ENCODE measurements at regions of chr10 and their contacts with region 1.

Region 1: DNA sequence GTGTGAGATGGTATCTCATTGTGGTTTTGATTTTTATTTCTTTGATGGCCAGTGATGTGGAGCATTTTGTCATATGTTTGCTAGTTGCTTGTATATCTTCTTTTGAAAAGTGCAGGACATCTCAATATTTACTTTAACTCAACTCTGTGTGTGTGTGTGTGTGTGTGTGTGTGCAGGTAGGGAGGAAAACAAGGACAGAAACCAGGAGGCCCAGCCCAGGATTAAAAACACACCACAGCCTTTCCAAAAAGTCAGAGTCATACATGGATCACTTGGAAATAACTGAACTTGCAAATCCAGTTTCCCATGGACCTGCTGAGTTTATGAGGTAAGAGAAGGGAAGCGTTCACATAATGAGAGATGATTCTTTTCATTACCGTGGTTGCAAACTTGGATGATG is 189.9 kb upstream of the LYZL1 start:
- DNase-seq: peak; percentile 26 to 79
- H3K4me3 ChIP-seq: no peak overlapping the region
- H3K27ac ChIP-seq: no peak overlapping the region
- H3K4me1 ChIP-seq: peaks cover 23% of the 10 kb centered on the region
- H3K27me3 ChIP-seq: no peaks in the 10 kb centered on the region
- CTCF ChIP-seq: no peak

Region 2: DNA sequence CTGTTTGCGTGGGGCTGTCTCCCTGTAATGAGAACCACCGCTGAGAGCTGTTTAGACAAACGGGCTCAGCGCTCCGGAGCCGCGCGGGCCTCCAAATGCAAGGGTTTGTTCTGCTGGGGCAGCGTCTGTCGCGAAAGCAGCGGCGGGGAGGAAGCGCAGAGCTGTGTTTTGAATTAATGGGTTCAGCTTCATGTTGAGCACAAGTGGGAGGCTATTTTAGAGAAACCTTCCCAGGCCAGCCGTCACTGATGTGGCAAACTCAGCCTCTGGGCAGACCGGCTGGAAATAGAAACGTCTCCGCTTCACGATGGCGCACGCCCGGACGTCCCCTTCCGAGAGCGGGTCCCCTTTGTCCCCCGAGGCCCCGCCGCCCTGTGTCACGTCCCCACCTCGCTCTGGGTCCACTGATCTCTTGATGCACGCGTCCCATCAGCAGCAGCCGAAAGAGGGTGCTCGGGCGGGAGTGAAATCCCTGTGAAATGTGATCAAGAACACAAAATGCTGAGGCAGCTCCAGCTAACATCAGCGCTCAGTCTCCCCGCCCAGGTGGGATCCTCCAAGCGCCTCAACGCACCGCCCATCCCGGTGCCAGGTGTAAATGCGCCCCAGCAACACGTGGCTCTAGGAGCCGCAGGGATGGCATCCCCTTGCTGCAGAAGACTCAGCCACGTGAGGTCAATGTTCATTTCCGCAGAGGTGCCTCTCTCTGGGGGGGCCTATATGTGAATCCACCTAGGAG is 376.7 kb before region 1 on chr10:
- CTCF ChIA-PET with region 1: no interaction called
- POLR2A ChIA-PET with region 1: no interaction called
- intact Hi-C with region 1: no loop called
- DNase-seq: no peak
- H3K4me3 ChIP-seq: no peak overlapping the region
- H3K27ac ChIP-seq: no peak overlapping the region
- H3K4me1 ChIP-seq: peaks cover 10% of the 10 kb centered on the region
- H3K27me3 ChIP-seq: no peaks in the 10 kb centered on the region
- CTCF ChIP-seq: no peak

Region 3: GRCh38 chr10:29050081-29050480 is 48.9 kb before region 1 on chr10:
- CTCF ChIA-PET with region 1: no interaction called
- POLR2A ChIA-PET with region 1: no interaction called
- intact Hi-C with region 1: no loop called
- DNase-seq: no peak
- H3K4me3 ChIP-seq: no peak overlapping the region
- H3K27ac ChIP-seq: no peak overlapping the region
- H3K4me1 ChIP-seq: 0 out of 2 replicates have a peak, but pooled peaks cover 5% of the 10 kb centered on the region
- H3K27me3 ChIP-seq: no peaks in the 10 kb centered on the region
- CTCF ChIP-seq: no peak

Region 4: DNA sequence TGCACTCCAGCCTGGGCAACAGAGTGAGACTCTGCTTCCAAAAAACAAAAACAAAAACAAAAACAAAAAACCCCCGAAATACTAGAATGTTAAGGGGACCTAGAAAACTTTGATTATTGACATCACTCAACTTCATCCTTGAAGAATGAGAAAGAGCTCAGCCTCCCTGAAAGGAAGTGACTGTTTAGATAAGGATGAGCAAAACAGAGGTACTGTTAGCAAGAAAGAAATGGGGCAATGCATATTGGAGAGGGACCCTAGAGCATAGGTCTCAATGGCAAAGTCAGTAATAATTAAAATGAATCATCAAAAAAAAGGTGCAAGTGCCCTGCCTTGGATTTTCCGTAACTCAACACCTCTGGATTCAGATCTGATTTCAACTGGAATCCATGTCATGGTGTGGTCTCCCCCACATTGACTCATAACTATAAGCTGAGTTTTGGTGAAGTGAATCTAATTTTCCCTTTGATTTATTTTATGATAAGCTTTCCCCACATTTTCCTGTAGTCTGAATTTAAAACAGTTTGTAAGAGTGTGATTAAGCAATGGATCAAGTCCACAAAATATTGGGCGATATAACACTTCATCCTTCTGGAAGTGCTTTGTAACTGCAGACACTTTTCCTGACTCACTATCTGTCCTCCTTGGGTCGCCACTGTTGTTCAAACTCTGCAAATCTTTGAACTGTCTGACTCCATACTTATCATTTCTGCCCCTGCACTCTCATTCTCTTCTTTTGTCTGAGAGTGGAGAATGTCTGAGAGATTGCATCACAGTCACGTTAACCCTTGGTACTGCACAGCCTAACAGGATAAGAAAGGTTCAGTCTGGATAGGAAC is 35.0 kb before region 1 on chr10:
- CTCF ChIA-PET with region 1: no interaction called
- POLR2A ChIA-PET with region 1: no interaction called
- intact Hi-C with region 1: loop called (anchors 2 kb)
- DNase-seq: peak; percentile 37 to 76
- H3K4me3 ChIP-seq: peak overlapping the region; percentile 29; the same call in 1 of the 2 replicates
- H3K27ac ChIP-seq: peak overlapping the region; percentile 83
- H3K4me1 ChIP-seq: peaks cover 26% of the 10 kb centered on the region
- H3K27me3 ChIP-seq: no peaks in the 10 kb centered on the region
- CTCF ChIP-seq: no peak; the same call in 1 of the 2 replicates

Measured in PC-9 (cell line).